HepG2 (cell line): ENCODE measurements at regions of chrX and their contacts with region 1.

Region 1: DNA sequence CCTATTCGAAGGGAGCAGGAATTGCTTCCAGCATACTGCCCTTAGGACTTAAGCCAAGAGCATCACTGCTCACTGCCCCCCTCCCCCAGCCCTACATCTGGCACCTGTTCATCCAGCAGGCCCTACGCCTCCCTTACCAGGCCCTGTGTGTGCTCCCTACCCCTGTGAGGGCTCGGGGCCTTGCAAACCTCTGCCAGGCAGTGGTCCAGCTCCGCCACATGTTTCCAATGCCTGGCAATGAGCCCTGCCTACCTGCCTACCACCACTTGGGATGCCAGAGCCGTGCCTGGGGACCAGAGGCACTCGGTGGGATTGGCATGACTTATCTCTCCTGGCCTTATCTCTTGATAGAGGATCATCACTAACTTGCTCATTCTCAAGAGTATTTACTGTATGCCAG is 27.5 kb upstream of the MTM1 start:
- DNase-seq: no peak
- ATAC-seq: no peak
- H3K4me3 ChIP-seq: no peak overlapping the region
- H3K27ac ChIP-seq: no peak overlapping the region
- H3K4me1 ChIP-seq: peaks cover 17% of the 10 kb centered on the region
- H3K27me3 ChIP-seq: no peaks in the 10 kb centered on the region; a peak in 1 of 5 replicates
- CTCF ChIP-seq: no peak
- EP300 ChIP-seq: no peak
- POLR2A ChIP-seq: no peak
- RAD21 ChIP-seq: no peak

Region 2: DNA sequence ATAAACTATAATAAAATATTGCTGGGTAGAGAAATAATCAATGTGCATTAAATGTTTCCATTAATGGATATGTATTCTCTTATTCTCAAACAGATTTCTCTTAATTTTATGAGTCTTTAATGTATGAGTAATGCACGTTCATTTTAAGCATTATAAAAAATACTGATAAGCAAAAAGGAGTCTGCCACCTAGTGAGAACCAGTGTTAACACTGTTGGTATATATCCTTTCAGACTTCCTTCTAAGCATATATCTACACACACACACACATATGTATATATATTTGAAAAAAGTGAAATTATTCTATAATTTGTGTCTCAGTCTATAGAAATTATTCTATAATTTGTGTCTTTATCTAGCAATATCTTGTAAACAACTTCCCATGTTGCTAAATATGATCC is 102.3 kb after region 1 on chrX:
- CTCF ChIA-PET with region 1: no interaction called
- POLR2A ChIA-PET with region 1: no interaction called
- in situ Hi-C with region 1: no loop called
- intact Hi-C with region 1: loop called (anchors 1 kb)
- DNase-seq: no peak
- ATAC-seq: no peak
- H3K4me3 ChIP-seq: no peak overlapping the region
- H3K27ac ChIP-seq: no peak overlapping the region
- H3K4me1 ChIP-seq: no peaks in the 10 kb centered on the region
- H3K27me3 ChIP-seq: no peaks in the 10 kb centered on the region
- CTCF ChIP-seq: no peak
- EP300 ChIP-seq: no peak
- POLR2A ChIP-seq: no peak
- RAD21 ChIP-seq: no peak